Endothelial cell of umbilical vein (primary cell): ENCODE measurements at regions of chr4 and their contacts with region 1.

Region 1: GRCh38 chr4:142121448-142122350 is 485.3 kb downstream of the IL15 start:
- DNase-seq: peak; percentile 92
- H3K4me3 ChIP-seq: peak overlapping the region in 1 of 3 experiments; percentile 23
- H3K27ac ChIP-seq: peak overlapping the region; percentile 100
- H3K4me1 ChIP-seq: peaks cover 30% of the 10 kb centered on the region
- H3K27me3 ChIP-seq: no peaks in the 10 kb centered on the region
- CTCF ChIP-seq: no peak
- POLR2A ChIP-seq: peak; percentile 46

Region 2: GRCh38 chr4:141307241-141307689 is 814.4 kb before region 1 on chr4:
- CTCF ChIA-PET with region 1: no interaction called
- POLR2A ChIA-PET with region 1: no interaction called
- dilution Hi-C with region 1: no loop called
- intact Hi-C with region 1: loop called (anchors 1 kb)
- DNase-seq: peak; percentile 69
- H3K4me3 ChIP-seq: no peak overlapping the region
- H3K27ac ChIP-seq: no peak overlapping the region
- H3K4me1 ChIP-seq: no peaks in the 10 kb centered on the region
- H3K27me3 ChIP-seq: no peaks in the 10 kb centered on the region
- CTCF ChIP-seq: peak; percentile 69 to 81
- POLR2A ChIP-seq: no peak

Region 3: DNA sequence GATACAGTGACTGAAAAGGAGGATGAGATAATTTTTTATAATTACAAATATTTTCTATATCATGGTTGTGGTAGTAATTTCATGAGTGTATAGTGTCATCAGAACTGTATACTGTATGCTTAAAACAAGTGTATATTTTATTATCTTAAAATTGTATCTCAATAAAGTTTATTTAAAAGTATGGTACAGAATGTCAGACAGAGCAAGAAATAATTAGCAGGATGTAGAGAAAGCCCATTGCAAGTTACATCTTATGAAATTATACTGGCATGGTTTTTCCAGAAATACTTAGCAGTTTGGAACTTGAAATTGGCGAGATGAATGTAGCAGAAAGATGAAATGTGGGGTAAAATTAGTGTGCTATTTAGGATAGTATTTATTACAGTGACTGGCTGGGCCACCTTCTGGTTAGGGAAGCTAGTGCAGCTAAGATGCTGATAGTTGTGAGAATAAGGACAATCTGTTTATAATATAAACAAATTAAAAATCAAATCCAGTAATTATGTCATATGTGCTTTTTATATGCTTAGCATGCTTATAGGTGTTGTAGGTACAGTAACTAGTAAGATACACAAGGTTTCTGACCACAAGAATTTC is 410.6 kb before region 1 on chr4:
- CTCF ChIA-PET with region 1: no interaction called
- POLR2A ChIA-PET with region 1: no interaction called
- dilution Hi-C with region 1: no loop called
- intact Hi-C with region 1: loop called (anchors 2 kb)
- DNase-seq: peak; percentile 50
- H3K4me3 ChIP-seq: no peak overlapping the region
- H3K27ac ChIP-seq: no peak overlapping the region
- H3K4me1 ChIP-seq: peaks cover 4% of the 10 kb centered on the region
- H3K27me3 ChIP-seq: no peaks in the 10 kb centered on the region
- CTCF ChIP-seq: peak; percentile 40 to 52
- POLR2A ChIP-seq: no peak

Region 4: DNA sequence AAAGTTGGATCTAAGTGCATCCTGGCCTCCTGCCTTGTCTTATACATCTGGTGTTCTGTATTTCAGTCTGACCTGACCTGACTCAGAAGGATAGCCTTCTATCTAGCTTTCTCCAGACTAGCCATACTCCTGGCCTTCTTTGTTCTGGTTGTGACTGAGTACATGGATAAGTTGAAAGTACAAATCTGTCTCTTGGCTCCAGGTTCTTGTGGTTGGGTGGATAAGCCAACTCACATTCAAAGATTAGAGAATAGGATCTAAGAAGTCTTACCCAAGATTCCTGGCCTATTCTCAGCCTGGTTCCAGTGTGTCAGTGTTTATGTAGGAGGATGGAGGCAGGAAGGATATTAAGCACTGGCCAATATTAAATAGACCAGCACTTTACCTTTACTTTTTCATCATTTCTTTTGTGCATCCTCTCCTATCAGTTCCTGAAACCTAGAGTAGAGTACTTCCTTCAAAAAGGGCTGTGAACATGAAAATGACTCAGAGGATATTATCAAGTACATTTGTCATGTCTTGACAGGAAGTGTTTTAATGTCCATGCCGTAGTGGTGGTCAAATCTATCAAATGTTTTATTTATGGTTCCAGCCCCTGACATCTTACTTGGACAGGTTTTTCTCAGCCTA is 361.8 kb before region 1 on chr4:
- CTCF ChIA-PET with region 1: interaction called, 5 read pairs
- POLR2A ChIA-PET with region 1: no interaction called
- dilution Hi-C with region 1: no loop called
- intact Hi-C with region 1: loop called (anchors 1 kb)
- DNase-seq: peak; percentile 67
- H3K4me3 ChIP-seq: no peak overlapping the region
- H3K27ac ChIP-seq: peak overlapping the region; percentile 81
- H3K4me1 ChIP-seq: peaks cover 36% of the 10 kb centered on the region
- H3K27me3 ChIP-seq: no peaks in the 10 kb centered on the region
- CTCF ChIP-seq: no peak
- POLR2A ChIP-seq: no peak

Region 5: GRCh38 chr4:141826260-141826659 is 295.4 kb before region 1 on chr4:
- CTCF ChIA-PET with region 1: no interaction called
- POLR2A ChIA-PET with region 1: no interaction called
- dilution Hi-C with region 1: no loop called
- intact Hi-C with region 1: loop called (anchors 1 kb)
- DNase-seq: peak; percentile 45
- H3K4me3 ChIP-seq: no peak overlapping the region
- H3K27ac ChIP-seq: peak overlapping the region; percentile 68
- H3K4me1 ChIP-seq: peaks cover 19% of the 10 kb centered on the region
- H3K27me3 ChIP-seq: no peaks in the 10 kb centered on the region
- CTCF ChIP-seq: no peak
- POLR2A ChIP-seq: no peak

Region 6: DNA sequence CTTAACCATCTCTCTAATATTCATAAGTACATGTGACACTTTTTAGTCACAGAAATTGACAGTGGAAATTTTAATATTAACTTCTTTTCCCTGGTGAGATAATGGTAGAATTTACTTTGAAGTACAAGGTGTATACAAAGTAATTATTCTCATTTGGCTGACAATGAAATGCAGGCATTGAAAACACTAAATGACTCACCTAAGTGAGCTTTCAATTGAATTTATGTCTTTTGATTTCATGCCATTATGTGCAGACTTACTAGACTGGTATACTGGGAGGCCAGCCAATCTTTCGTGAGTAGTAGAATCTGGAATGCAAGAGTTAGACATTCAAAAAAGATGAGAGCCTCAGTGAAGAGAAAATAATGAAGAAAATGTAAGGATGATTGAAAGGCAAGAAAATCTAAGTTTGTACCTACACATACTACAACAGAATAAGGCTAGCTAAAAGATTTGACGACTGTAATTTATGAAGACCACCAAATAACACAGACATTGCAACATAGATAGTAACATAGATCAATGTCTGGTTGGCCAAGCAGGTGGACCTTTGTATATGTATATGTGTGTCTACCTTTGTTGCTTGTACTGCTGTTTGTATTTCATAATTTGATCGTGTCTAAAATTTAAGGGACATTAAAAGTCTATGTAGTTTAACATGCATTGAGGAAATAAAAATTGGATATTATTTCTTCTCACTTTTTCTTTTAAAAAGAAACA is 25.7 kb before region 1 on chr4:
- CTCF ChIA-PET with region 1: interaction called, 7 read pairs
- POLR2A ChIA-PET with region 1: no interaction called
- dilution Hi-C with region 1: no loop called
- intact Hi-C with region 1: loop called (anchors 1 kb)
- DNase-seq: peak; percentile 94
- H3K4me3 ChIP-seq: no peak overlapping the region
- H3K27ac ChIP-seq: peak overlapping the region; percentile 68
- H3K4me1 ChIP-seq: peaks cover 28% of the 10 kb centered on the region
- H3K27me3 ChIP-seq: no peaks in the 10 kb centered on the region
- CTCF ChIP-seq: no peak
- POLR2A ChIP-seq: no peak